Vagina (tissue), 2 donors: ENCODE measurements at regions of chr5 and their contacts with region 1.

Region 1: GRCh38 chr5:168117469-168117868 is 174.0 kb upstream of the WWC1 start:
- DNase-seq: no peak
- H3K4me3 ChIP-seq: no peak overlapping the region
- H3K27ac ChIP-seq: no peak overlapping the region
- H3K4me1 ChIP-seq: no peaks in the 10 kb centered on the region
- H3K27me3 ChIP-seq: no peaks in the 10 kb centered on the region
- CTCF ChIP-seq: no peak
- POLR2A ChIP-seq: no peak

Region 2: GRCh38 chr5:168073991-168074800 is 43.3 kb before region 1 on chr5:
- intact Hi-C with region 1: loop called (anchors 2 kb)
- DNase-seq: no peak
- H3K4me3 ChIP-seq: no peak overlapping the region
- H3K27ac ChIP-seq: no peak overlapping the region
- H3K4me1 ChIP-seq: no peaks in the 10 kb centered on the region
- H3K27me3 ChIP-seq: no peaks in the 10 kb centered on the region
- CTCF ChIP-seq: no peak
- POLR2A ChIP-seq: no peak

Region 3: GRCh38 chr5:168513861-168514428 is 396.5 kb after region 1 on chr5:
- intact Hi-C with region 1: no loop called
- DNase-seq: no peak
- H3K4me3 ChIP-seq: no peak overlapping the region
- H3K27ac ChIP-seq: no peak overlapping the region
- H3K4me1 ChIP-seq: no peaks in the 10 kb centered on the region
- H3K27me3 ChIP-seq: no peaks in the 10 kb centered on the region
- CTCF ChIP-seq: no peak
- POLR2A ChIP-seq: no peak